Heart right ventricle (tissue), 16 donors: ENCODE measurements at regions of chr5 and their contacts with region 1.

Region 1: GRCh38 chr5:43389679-43390329 is 22.4 kb downstream of the CCL28 start:
- DNase-seq: peak in 1 of 2 donors; percentile 50
- ATAC-seq: peak; percentile 72 to 93 (median 88)
- H3K4me3 ChIP-seq: no peak overlapping the region
- H3K27ac ChIP-seq: no peak overlapping the region
- H3K4me1 ChIP-seq: peaks cover 0 to 7% (median 0%) of the 10 kb centered on the region in 9 donors
- H3K27me3 ChIP-seq: peaks cover 0 to 9% (median 0%) of the 10 kb centered on the region in 7 donors
- CTCF ChIP-seq: peak; percentile 61 to 85 (median 80)

Region 2: DNA sequence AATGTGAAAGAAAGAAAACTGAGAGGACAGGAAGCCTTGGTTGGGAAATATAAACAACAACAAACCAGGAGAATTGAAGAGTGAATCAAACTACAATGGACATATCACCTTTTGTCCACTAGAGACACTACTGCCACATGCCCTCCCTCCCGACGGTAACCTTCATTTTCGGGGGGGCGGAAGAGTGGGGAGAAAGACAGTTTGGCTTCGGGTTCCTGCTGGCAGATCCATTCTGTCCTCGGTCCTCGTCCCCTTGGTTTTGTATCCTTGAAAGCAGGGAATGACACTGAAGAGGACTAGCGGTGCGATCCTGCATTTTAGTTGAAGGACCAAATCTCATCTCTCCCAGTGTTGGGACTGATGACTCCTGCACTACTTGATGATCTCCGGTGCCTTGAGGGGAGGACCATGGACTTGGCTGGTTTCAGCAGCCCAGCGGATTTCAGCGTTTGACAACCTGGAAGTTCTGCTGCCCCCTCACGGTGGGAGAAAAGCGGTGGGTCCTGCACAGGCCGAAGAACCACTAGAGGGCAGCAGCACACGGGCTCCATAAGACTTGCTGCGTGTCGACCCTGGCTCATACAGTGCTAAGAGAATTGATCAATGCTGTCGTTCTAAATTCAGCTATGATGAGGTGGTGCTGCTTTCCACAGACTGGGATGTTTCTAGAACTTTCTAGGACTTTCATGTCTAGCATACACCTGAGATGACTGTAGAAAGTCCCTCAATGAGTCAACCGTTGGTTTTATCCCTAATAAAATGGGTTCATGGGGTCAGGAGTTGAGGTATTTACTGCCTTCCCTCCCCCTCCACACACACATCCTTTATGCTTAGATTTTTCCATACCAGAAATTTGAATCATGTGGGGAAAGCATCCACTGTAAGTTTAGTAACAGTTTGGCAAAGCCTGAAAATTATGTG is 284.2 kb before region 1 on chr5:
- intact Hi-C with region 1: loop called in 7 of 10 experiments (anchors 2 to 10 kb)
- DNase-seq: peak; percentile 87 to 90
- ATAC-seq: peak; percentile 90 to 97 (median 95)
- H3K4me3 ChIP-seq: peak overlapping the region in 9 of 10 donors; percentile 26 to 58 (median 48)
- H3K27ac ChIP-seq: peak overlapping the region in 9 of 10 donors; percentile 42 to 76 (median 53)
- H3K4me1 ChIP-seq: peaks cover 0 to 10% (median 5%) of the 10 kb centered on the region in 9 donors
- H3K27me3 ChIP-seq: no peaks in the 10 kb centered on the region
- CTCF ChIP-seq: peak; percentile 97 to 100 (median 100)

Region 3: GRCh38 chr5:43110606-43111442 is 279.0 kb before region 1 on chr5:
- intact Hi-C with region 1: loop called in 6 of 10 experiments (anchors 5 to 10 kb)
- DNase-seq: no peak
- ATAC-seq: no peak
- H3K4me3 ChIP-seq: no peak overlapping the region
- H3K27ac ChIP-seq: no peak overlapping the region
- H3K4me1 ChIP-seq: peaks cover 0 to 4% (median 0%) of the 10 kb centered on the region in 9 donors
- H3K27me3 ChIP-seq: no peaks in the 10 kb centered on the region
- CTCF ChIP-seq: no peak

Region 4: GRCh38 chr5:43227655-43228054 is 162.1 kb before region 1 on chr5:
- intact Hi-C with region 1: loop called (anchors 2 to 10 kb)
- DNase-seq: no peak
- ATAC-seq: no peak
- H3K4me3 ChIP-seq: no peak overlapping the region
- H3K27ac ChIP-seq: no peak overlapping the region
- H3K4me1 ChIP-seq: no peaks in the 10 kb centered on the region
- H3K27me3 ChIP-seq: no peaks in the 10 kb centered on the region
- CTCF ChIP-seq: peak in 8 of 9 donors; percentile 10 to 60 (median 42)

Region 5: GRCh38 chr5:43320846-43321245 is 69.0 kb before region 1 on chr5:
- intact Hi-C with region 1: no loop called
- DNase-seq: no peak
- ATAC-seq: no peak
- H3K4me3 ChIP-seq: no peak overlapping the region
- H3K27ac ChIP-seq: no peak overlapping the region
- H3K4me1 ChIP-seq: no peaks in the 10 kb centered on the region
- H3K27me3 ChIP-seq: no peaks in the 10 kb centered on the region
- CTCF ChIP-seq: no peak